Endothelial cell of umbilical vein (primary cell): ENCODE measurements at regions of chr19 and their contacts with region 1.

Region 1: DNA sequence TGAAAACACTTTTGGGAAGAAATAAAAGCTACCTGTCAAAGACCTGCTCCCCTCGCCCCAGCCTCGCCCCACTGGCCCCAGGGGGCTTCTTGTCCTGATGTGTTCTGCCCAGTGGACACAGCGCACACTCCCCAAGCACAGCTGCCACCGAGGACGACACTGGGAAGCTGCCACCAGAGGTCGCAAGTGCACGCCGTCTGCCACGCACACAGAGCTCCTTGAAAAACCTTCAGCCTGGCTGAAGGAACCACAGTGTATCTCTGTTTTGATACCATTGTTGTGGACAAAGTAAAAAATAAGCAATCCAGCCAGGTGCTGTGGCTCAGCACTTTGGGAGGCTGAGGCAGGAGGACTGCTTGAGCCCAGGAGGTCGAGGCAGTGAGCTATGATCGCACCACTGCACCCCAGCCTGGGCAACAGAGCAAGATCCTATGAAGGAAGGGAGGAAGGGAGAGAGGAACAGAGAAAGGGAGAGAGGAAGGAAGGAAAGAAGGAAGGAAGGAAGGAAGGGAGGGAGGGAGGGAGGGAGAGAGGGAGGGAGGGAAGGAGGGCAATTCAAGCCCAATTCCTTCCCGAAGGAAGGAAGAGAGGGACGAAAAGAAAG is 57.3 kb downstream of the CEBPG start:
- DNase-seq: peak; percentile 65
- H3K4me3 ChIP-seq: no peak overlapping the region
- H3K27ac ChIP-seq: no peak overlapping the region
- H3K4me1 ChIP-seq: peaks cover 6% of the 10 kb centered on the region
- H3K27me3 ChIP-seq: no peaks in the 10 kb centered on the region
- CTCF ChIP-seq: peak; percentile 73 to 91
- POLR2A ChIP-seq: no peak

Region 2: GRCh38 chr19:33416307-33417215 is 14.2 kb before region 1 on chr19:
- CTCF ChIA-PET with region 1: interaction called, 33 read pairs
- POLR2A ChIA-PET with region 1: no interaction called
- dilution Hi-C with region 1: no loop called
- intact Hi-C with region 1: no loop called
- DNase-seq: peak; percentile 62
- H3K4me3 ChIP-seq: no peak overlapping the region
- H3K27ac ChIP-seq: no peak overlapping the region
- H3K4me1 ChIP-seq: no peaks in the 10 kb centered on the region
- H3K27me3 ChIP-seq: no peaks in the 10 kb centered on the region
- CTCF ChIP-seq: peak; percentile 72 to 79
- POLR2A ChIP-seq: no peak

Region 3: DNA sequence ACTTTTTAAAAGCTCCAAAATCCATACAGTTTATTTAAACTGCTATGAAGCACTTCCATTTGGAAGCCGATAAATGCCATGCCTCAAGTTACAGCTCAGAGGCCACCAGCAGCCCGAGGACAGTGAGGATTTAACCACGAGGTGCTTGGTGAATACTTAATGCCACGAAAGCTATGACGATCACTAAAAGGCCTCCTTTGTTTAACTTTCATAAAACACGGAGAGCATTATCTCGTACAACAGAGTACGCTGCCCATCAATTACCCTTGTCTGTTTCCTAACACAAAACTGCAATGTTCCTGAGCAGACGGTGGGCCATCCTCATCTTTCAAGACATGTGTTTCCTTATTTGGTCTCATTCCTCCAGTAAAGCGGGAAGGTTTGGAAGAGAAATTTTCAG is 32.4 kb after region 1 on chr19:
- CTCF ChIA-PET with region 1: no interaction called
- POLR2A ChIA-PET with region 1: no interaction called
- dilution Hi-C with region 1: no loop called
- intact Hi-C with region 1: no loop called
- DNase-seq: no peak
- H3K4me3 ChIP-seq: no peak overlapping the region
- H3K27ac ChIP-seq: no peak overlapping the region
- H3K4me1 ChIP-seq: no peaks in the 10 kb centered on the region
- H3K27me3 ChIP-seq: no peaks in the 10 kb centered on the region
- CTCF ChIP-seq: no peak
- POLR2A ChIP-seq: no peak

Region 4: GRCh38 chr19:33521480-33522370 is 90.9 kb after region 1 on chr19 and contains the start of gene PEPD:
- CTCF ChIA-PET with region 1: interaction called, 39 read pairs
- POLR2A ChIA-PET with region 1: interaction called, 7 read pairs
- dilution Hi-C with region 1: no loop called
- intact Hi-C with region 1: loop called (anchors 1 kb)
- DNase-seq: peak; percentile 89
- H3K4me3 ChIP-seq: peak within 1 kb of the TSS; percentile 73 to 93 (median 83)
- H3K27ac ChIP-seq: peak within 1 kb of the TSS; percentile 25
- H3K4me1 ChIP-seq: peaks cover 9% of the 10 kb centered on the region
- H3K27me3 ChIP-seq: no peaks in the 10 kb centered on the region
- CTCF ChIP-seq: no peak
- POLR2A ChIP-seq: peak; percentile 84
- total RNA-seq, gene PEPD: 62.7 and 73.7 TPM in 2 replicates

Region 5: DNA sequence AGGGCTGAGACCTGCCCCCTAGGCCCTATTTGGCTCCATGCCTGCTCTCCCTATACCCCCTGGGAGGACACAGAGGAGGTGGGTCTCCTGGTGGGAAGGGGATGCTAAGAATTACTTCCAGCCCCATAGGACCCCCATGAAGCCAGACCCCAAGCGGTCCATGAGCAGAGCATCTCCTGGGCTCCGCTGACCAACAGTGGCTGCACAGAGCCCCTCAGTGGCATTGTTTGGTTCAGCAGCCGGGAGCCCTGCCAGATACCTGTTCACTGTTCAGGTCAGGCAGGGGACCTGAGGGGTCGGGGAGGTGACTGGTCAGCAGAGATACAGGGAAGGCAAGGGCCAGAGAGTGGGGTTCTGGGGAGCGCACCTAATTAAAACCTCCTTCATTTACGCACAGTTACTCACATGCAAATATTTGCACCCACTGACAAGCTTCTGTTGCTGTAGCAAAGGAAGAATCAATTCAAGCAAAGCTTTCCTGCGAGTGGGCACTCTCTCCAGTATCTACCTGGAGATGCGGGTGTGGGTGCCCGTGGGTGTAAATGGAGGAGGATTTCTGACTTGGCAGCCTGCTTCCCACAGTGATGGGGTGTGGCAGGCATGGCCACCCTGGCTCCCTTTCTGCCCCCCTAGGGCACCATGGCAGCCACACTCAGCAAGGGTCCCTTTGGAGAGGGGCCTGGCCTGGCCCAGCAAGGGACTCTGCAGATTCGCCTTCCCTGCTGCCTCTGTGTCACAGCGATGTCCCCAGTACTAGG is 274.5 kb after region 1 on chr19:
- CTCF ChIA-PET with region 1: interaction called, 11 read pairs
- POLR2A ChIA-PET with region 1: no interaction called
- dilution Hi-C with region 1: no loop called
- intact Hi-C with region 1: no loop called
- DNase-seq: no peak
- H3K4me3 ChIP-seq: no peak overlapping the region
- H3K27ac ChIP-seq: no peak overlapping the region
- H3K4me1 ChIP-seq: no peaks in the 10 kb centered on the region
- H3K27me3 ChIP-seq: no peaks in the 10 kb centered on the region
- CTCF ChIP-seq: no peak
- POLR2A ChIP-seq: no peak

Region 6: GRCh38 chr19:33771384-33772101 is 340.8 kb after region 1 on chr19:
- CTCF ChIA-PET with region 1: interaction called, 284 read pairs
- POLR2A ChIA-PET with region 1: no interaction called
- dilution Hi-C with region 1: no loop called
- intact Hi-C with region 1: loop called (anchors 1 kb)
- DNase-seq: peak; percentile 51
- H3K4me3 ChIP-seq: no peak overlapping the region
- H3K27ac ChIP-seq: no peak overlapping the region
- H3K4me1 ChIP-seq: no peaks in the 10 kb centered on the region
- H3K27me3 ChIP-seq: no peaks in the 10 kb centered on the region
- CTCF ChIP-seq: peak; percentile 76 to 82
- POLR2A ChIP-seq: no peak